ENCODE measurements at regions of chr19 and their contacts with region 1.

Region 1: GRCh38 chr19:58499021-58499927 is 12.5 kb downstream of the SLC27A5 start:
- DNase-seq: peak; percentile 100
- ATAC-seq: peak; percentile 99
- H3K4me3 Mint-ChIP-seq: peak overlapping the region; percentile 81
- H3K27ac Mint-ChIP-seq: peak overlapping the region; percentile 95
- H3K4me1 Mint-ChIP-seq: peaks cover 19% of the 10 kb centered on the region
- H3K27me3 Mint-ChIP-seq: no peaks in the 10 kb centered on the region

Region 2: GRCh38 chr19:58284199-58284598 is 215.1 kb before region 1 on chr19:
- CTCF ChIA-PET with region 1: no interaction called
- POLR2A ChIA-PET with region 1: no interaction called
- intact Hi-C with region 1: no loop called
- DNase-seq: no peak
- ATAC-seq: no peak
- H3K4me3 Mint-ChIP-seq: no peak overlapping the region
- H3K27ac Mint-ChIP-seq: no peak overlapping the region
- H3K4me1 Mint-ChIP-seq: peaks cover 26% of the 10 kb centered on the region
- H3K27me3 Mint-ChIP-seq: no peaks in the 10 kb centered on the region

Region 3: DNA sequence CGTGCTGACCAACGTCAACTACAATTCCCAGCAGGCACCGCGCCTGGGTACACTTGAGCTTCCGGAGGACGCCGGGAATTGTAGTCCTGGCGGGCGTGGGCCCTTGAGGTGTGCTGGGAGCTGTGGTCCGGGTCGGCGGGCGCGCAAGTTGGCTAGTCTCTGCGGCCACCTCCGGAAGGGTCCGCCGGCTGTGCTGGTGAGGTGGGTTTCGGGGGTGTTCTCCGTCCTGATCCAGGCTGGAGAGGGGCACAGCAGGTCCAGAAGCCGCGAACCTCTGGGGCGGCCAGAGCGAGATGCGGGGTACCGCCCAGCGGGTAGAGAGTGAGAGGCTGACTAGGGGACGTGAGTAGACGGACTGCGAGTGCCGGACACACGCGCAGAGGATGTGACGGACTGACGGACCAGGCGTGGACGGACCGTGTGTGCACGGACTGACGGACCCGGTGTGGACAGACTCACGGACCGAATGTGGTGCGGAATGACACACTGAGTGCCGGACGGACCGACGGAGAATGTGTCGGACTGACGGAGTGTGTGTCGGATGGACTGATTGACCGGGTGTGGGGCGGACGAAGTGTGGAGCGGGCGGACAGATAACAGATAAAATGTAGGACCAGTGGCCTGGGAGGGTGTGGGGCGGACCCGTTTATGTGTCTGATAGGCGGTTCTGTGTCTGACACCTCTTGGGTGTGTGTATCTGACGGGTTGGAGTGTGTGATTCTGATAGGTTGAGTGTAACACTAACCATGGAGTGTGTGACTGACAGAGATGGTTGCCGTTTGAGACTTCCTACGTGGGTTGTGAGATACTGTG is 172.2 kb before region 1 on chr19 and contains the start of gene ZSCAN22:
- CTCF ChIA-PET with region 1: interaction called, 5 read pairs
- POLR2A ChIA-PET with region 1: no interaction called
- intact Hi-C with region 1: loop called in 1 of 2 experiments (anchors 1 kb)
- DNase-seq: peak; percentile 96
- ATAC-seq: peak; percentile 91
- H3K4me3 Mint-ChIP-seq: no peak within 1 kb of the TSS
- H3K27ac Mint-ChIP-seq: no peak within 1 kb of the TSS
- H3K4me1 Mint-ChIP-seq: peaks cover 4% of the 10 kb centered on the region
- H3K27me3 Mint-ChIP-seq: no peaks in the 10 kb centered on the region
- total RNA-seq, gene ZSCAN22: 3.1 to 3.8 TPM

Region 4: GRCh38 chr19:58400916-58401839 is 98.1 kb before region 1 on chr19:
- CTCF ChIA-PET with region 1: no interaction called
- POLR2A ChIA-PET with region 1: no interaction called
- intact Hi-C with region 1: loop called in 1 of 2 experiments (anchors 1 kb)
- DNase-seq: peak; percentile 100
- ATAC-seq: peak; percentile 97
- H3K4me3 Mint-ChIP-seq: peak overlapping the region; percentile 82
- H3K27ac Mint-ChIP-seq: peak overlapping the region; percentile 61
- H3K4me1 Mint-ChIP-seq: peaks cover 14% of the 10 kb centered on the region
- H3K27me3 Mint-ChIP-seq: peaks cover 2% of the 10 kb centered on the region

Region 5: GRCh38 chr19:58416604-58417003 is 82.7 kb before region 1 on chr19:
- CTCF ChIA-PET with region 1: no interaction called
- POLR2A ChIA-PET with region 1: no interaction called
- intact Hi-C with region 1: no loop called
- DNase-seq: no peak
- ATAC-seq: no peak
- H3K4me3 Mint-ChIP-seq: no peak overlapping the region
- H3K27ac Mint-ChIP-seq: no peak overlapping the region
- H3K4me1 Mint-ChIP-seq: no peaks in the 10 kb centered on the region
- H3K27me3 Mint-ChIP-seq: no peaks in the 10 kb centered on the region

Region 6: GRCh38 chr19:58466760-58467589 is 32.3 kb before region 1 on chr19 and contains the start of gene ZNF324:
- CTCF ChIA-PET with region 1: no interaction called
- POLR2A ChIA-PET with region 1: no interaction called
- intact Hi-C with region 1: loop called in 1 of 2 experiments (anchors 1 kb)
- DNase-seq: peak; percentile 99
- ATAC-seq: peak; percentile 98
- H3K4me3 Mint-ChIP-seq: peak within 1 kb of the TSS; percentile 86
- H3K27ac Mint-ChIP-seq: peak within 1 kb of the TSS; percentile 47
- H3K4me1 Mint-ChIP-seq: peaks cover 22% of the 10 kb centered on the region
- H3K27me3 Mint-ChIP-seq: peaks cover 2% of the 10 kb centered on the region
- total RNA-seq, gene ZNF324: 4.7 to 7.5 TPM

Region 7: DNA sequence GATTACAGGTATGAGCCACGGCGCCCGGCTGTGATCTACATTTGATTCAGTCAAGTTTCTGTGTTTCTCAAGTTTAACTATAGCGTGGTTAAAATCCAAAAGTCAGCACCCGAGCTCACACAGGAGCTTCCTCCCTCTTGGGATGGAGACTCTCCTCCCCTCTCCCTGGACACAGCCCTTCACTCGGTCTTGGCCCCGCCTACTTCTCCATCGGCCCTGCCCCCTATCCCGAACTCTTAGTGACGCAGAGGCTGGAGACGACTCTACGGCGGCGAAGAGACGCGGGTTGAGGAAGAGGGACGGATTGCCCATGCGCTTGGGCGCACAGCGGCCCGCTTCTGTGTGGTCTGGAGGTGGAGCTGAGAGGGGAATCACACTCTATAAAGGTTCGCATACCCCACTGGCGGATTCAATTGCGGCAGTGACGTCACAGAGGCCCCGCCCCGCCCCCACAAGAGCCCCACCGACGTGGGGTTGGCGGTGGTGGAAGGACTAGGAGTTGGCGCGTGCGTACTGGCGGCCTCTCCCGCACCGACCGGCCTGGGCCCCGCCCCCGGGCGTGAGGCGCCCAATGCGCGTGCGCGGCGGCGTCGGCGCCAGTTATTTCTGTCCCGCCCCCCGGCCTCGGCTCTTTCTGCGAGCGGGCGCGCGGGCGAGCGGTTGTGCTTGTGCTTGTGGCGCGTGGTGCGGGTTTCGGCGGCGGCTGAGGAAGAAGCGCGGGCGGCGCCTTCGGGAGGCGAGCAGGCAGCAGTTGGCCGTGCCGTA is 44.7 kb after region 1 on chr19 and contains the start of gene TRIM28:
- CTCF ChIA-PET with region 1: no interaction called
- POLR2A ChIA-PET with region 1: no interaction called
- intact Hi-C with region 1: loop called in 1 of 2 experiments (anchors 1 kb)
- DNase-seq: peak; percentile 100
- ATAC-seq: peak; percentile 98
- H3K4me3 Mint-ChIP-seq: peak within 1 kb of the TSS; percentile 96
- H3K27ac Mint-ChIP-seq: peak within 1 kb of the TSS; percentile 97
- H3K4me1 Mint-ChIP-seq: peaks cover 34% of the 10 kb centered on the region
- H3K27me3 Mint-ChIP-seq: peaks cover 4% of the 10 kb centered on the region
- total RNA-seq, gene TRIM28: 481 to 758 TPM

Region 8: GRCh38 chr19:58581227-58582151 is 82.2 kb after region 1 on chr19:
- CTCF ChIA-PET with region 1: no interaction called
- POLR2A ChIA-PET with region 1: no interaction called
- intact Hi-C with region 1: no loop called
- DNase-seq: peak; percentile 97
- ATAC-seq: peak; percentile 95
- H3K4me3 Mint-ChIP-seq: no peak overlapping the region
- H3K27ac Mint-ChIP-seq: peak overlapping the region; percentile 84
- H3K4me1 Mint-ChIP-seq: peaks cover 33% of the 10 kb centered on the region
- H3K27me3 Mint-ChIP-seq: no peaks in the 10 kb centered on the region